AG04450 (cell line): ENCODE measurements at regions of chr1 and their contacts with region 1.

Region 1: GRCh38 chr1:53860967-53861411 is 22.9 kb upstream of the NDC1 start:
- DNase-seq: peak; percentile 27
- H3K4me3 ChIP-seq: no peak overlapping the region
- H3K27ac ChIP-seq: no peak overlapping the region
- H3K27me3 ChIP-seq: no peaks in the 10 kb centered on the region
- CTCF ChIP-seq: peak; percentile 86

Region 2: DNA sequence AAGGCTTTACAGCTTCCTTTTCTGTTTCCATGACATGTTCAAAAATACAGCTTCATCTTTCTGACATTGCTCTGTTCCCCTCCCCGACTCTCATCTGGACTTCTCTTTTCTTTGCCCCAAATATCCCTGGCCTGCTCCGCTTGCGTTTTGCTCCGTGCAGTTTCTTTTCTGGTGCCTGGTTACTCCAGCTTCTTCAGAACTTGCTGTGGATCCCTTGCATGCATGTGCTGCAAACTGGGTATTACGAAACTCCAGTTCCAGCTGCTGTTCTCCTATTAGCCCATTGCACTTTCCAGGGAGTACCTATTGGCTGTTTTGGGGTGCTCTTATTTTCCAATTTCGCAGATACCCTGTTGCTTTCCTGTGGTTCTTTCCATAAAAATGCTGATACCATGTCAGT is 13.0 kb before region 1 on chr1:
- CTCF ChIA-PET with region 1: interaction called, 32 read pairs
- POLR2A ChIA-PET with region 1: no interaction called
- DNase-seq: no peak
- H3K4me3 ChIP-seq: no peak overlapping the region
- H3K27ac ChIP-seq: no peak overlapping the region
- H3K27me3 ChIP-seq: no peaks in the 10 kb centered on the region
- CTCF ChIP-seq: no peak

Region 3: GRCh38 chr1:53878492-53879105 is 17.6 kb after region 1 on chr1:
- CTCF ChIA-PET with region 1: interaction called, 10 read pairs
- POLR2A ChIA-PET with region 1: no interaction called
- DNase-seq: peak; percentile 13
- H3K4me3 ChIP-seq: no peak overlapping the region
- H3K27ac ChIP-seq: no peak overlapping the region
- H3K27me3 ChIP-seq: no peaks in the 10 kb centered on the region
- CTCF ChIP-seq: peak; percentile 71

Region 4: GRCh38 chr1:53945433-53946251 is 84.7 kb after region 1 on chr1 and contains the start of gene IFT25:
- CTCF ChIA-PET with region 1: interaction called, 24 read pairs
- POLR2A ChIA-PET with region 1: no interaction called
- DNase-seq: peak; percentile 86
- H3K4me3 ChIP-seq: peak within 1 kb of the TSS; percentile 97
- H3K27ac ChIP-seq: peak within 1 kb of the TSS; percentile 70
- H3K27me3 ChIP-seq: no peaks in the 10 kb centered on the region
- CTCF ChIP-seq: no peak
- polyA plus RNA-seq, gene IFT25: 41.9 and 54.2 TPM in 2 replicates

Region 5: GRCh38 chr1:53959664-53960250 is 98.8 kb after region 1 on chr1:
- CTCF ChIA-PET with region 1: interaction called, 59 read pairs
- POLR2A ChIA-PET with region 1: interaction called, 11 read pairs
- DNase-seq: no peak
- H3K4me3 ChIP-seq: no peak overlapping the region
- H3K27ac ChIP-seq: no peak overlapping the region
- H3K27me3 ChIP-seq: no peaks in the 10 kb centered on the region
- CTCF ChIP-seq: peak; percentile 46

Region 6: DNA sequence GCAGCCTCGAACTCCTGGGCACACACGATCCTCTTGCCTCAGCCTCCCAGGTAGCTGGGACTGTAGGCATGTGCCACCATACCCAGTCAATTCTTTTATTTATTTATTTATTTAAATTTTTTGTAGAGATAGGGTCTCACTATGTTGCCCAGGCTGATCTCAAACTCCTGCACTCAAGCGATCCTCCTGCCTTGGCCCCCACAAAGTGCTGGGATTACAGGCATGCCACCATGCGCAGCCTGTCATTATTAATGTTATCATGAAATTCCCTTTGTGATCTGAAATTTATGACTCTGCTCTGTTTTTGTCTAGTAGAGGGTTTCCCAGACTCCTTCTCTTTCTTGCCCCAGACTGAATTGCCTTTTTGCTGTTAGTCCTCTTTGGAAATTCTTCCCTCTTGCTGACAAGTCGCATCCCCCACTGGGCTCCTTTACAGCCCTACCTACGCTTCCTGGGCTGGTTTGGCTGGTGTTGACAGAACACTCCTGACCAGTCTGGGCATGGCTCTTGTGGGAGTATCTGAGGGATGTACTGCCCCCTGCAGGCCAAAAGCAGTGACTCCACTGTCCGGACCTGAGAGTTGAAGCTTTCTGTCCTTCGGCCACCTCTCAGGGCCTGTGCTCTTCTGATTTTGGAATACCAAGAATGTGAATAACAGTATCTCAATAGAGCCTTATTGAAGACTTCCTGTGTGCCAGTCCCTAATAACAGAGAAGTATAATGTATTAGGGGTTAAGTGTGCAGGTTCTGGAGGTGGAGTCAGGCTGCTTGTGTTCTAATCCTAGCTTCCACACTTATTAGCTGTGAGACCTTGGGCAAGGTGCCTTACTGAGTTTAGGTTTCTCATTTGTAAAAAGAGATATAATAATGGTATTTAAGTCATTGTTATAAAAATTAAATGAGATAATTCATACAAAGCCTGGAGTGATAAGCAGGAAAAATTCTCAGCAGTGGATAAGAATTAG is 220.6 kb after region 1 on chr1:
- CTCF ChIA-PET with region 1: interaction called, 18 read pairs
- POLR2A ChIA-PET with region 1: no interaction called
- DNase-seq: peak; percentile 23
- H3K4me3 ChIP-seq: no peak overlapping the region
- H3K27ac ChIP-seq: no peak overlapping the region
- H3K27me3 ChIP-seq: no peaks in the 10 kb centered on the region
- CTCF ChIP-seq: peak; percentile 74